ENCODE measurements at regions of chr10 and their contacts with region 1.

Region 1: GRCh38 chr10:99834410-99834809 is 52.0 kb downstream of the ABCC2 start:
- DNase-seq: peak; percentile 91
- H3K4me3 ChIP-seq: no peak overlapping the region
- H3K27ac ChIP-seq: peak overlapping the region; percentile 85
- H3K4me1 ChIP-seq: peaks cover 14% of the 10 kb centered on the region
- H3K27me3 ChIP-seq: no peaks in the 10 kb centered on the region
- CTCF ChIP-seq: no peak

Region 2: GRCh38 chr10:99779335-99779734 is 55.1 kb before region 1 on chr10:
- CTCF ChIA-PET with region 1: no interaction called
- dilution Hi-C with region 1: no loop called
- in situ Hi-C with region 1: no loop called
- intact Hi-C with region 1: loop called (anchors 2 kb)
- DNase-seq: peak; percentile 51
- H3K4me3 ChIP-seq: peak overlapping the region; percentile 21 to 31 (median 31)
- H3K27ac ChIP-seq: peak overlapping the region; percentile 97
- H3K4me1 ChIP-seq: peaks cover 70% of the 10 kb centered on the region
- H3K27me3 ChIP-seq: no peaks in the 10 kb centered on the region
- CTCF ChIP-seq: no peak